Activated CD8-positive, alpha-beta T cell treated with anti-CD3 and anti-CD28 coated beads for 36 hours (primary cell): ENCODE measurements at regions of chr17 and their contacts with region 1.

Region 1: DNA sequence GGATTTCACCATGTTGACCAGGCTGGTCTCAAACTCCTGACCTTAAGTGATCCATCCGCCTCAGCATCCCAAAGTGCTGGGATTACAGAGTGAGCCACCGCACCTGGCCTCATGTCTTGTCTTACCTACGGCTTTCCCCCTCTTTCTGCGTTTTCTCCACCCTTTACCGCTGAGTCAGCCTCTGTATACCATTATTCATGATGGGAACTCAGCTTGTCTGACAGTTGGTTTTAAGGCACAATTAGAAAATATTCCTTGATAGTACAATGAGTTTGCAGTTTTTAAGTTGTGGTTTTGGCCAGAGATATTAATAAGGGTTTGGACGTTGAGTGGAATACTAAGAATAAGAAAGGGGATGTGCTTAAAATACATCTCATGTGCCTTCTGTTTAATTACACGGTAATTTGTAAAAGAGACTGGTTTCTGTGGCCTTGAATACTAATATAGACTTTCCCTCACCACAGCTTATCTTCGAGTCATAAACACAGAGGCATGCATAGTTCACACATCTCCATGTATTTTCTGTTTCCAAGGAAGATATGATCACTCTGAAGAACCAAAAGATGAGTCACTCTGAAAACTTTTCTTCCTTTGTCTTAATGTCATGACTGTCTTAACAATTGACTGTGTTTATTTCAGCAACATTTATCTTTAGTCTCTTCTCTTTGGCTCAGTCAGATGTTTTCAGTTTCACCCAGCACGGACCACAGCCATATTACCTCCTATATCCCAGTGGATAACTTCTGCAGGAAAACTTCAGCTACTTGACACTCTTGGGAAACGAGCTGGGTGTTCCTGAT is 54.4 kb downstream of the PITPNC1 start:
- DNase-seq: peak; percentile 36
- ATAC-seq: peak; percentile 69
- H3K4me3 Mint-ChIP-seq: peak overlapping the region; percentile 6
- H3K27ac Mint-ChIP-seq: peak overlapping the region; percentile 84
- H3K4me1 Mint-ChIP-seq: peaks cover 69% of the 10 kb centered on the region
- H3K27me3 Mint-ChIP-seq: no peaks in the 10 kb centered on the region
- CTCF ChIP-seq: no peak

Region 2: GRCh38 chr17:67366193-67367157 is 65.0 kb before region 1 on chr17 and contains the start of gene PSMD12:
- CTCF ChIA-PET with region 1: no interaction called
- POLR2A ChIA-PET with region 1: no interaction called
- intact Hi-C with region 1: no loop called
- DNase-seq: peak; percentile 94
- ATAC-seq: peak; percentile 94
- H3K4me3 Mint-ChIP-seq: peak within 1 kb of the TSS; percentile 97
- H3K27ac Mint-ChIP-seq: peak within 1 kb of the TSS; percentile 96
- H3K4me1 Mint-ChIP-seq: peaks cover 43% of the 10 kb centered on the region
- H3K27me3 Mint-ChIP-seq: no peaks in the 10 kb centered on the region
- CTCF ChIP-seq: no peak
- total RNA-seq, gene PSMD12: 80.9 to 89.1 TPM

Region 3: GRCh38 chr17:67452681-67453554 is 21.5 kb after region 1 on chr17:
- CTCF ChIA-PET with region 1: interaction called, 8 read pairs
- POLR2A ChIA-PET with region 1: interaction called, 57 read pairs
- intact Hi-C with region 1: no loop called
- DNase-seq: peak; percentile 62
- ATAC-seq: peak; percentile 82
- H3K4me3 Mint-ChIP-seq: peak overlapping the region; percentile 72
- H3K27ac Mint-ChIP-seq: peak overlapping the region; percentile 98
- H3K4me1 Mint-ChIP-seq: peaks cover 83% of the 10 kb centered on the region
- H3K27me3 Mint-ChIP-seq: no peaks in the 10 kb centered on the region
- CTCF ChIP-seq: no peak

Region 4: DNA sequence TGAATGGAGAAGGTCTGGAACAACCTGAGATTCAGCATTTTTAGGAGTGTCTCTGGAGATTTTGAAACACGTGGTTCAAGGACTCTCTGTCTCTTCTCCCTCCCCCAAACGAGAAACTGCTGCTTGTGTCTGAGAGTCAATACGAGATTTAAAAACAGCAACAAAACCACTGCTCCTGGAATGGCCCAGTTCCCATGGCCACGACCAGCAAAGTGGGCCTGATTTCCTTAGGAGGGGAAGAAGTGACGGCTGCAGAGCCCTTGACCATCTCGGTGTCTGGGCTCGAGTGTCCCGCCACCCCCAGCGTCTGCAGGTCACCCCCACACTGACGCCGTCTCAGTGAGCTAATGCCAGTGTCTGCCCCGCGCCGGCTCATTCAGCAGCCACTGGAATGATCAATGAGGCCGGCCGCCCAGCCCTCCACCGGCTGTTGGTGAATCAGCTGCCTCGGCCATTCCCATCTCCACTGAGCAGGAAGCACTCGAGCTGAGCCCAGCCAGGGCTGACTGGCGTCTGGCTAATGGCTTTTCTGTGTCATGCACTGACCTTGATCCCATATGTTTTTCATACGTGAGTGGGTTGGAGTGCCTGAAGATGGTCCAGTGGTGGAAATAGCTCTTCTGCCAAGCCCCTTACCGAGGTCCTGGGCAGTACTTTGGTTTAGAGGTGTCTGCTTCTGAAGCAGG is 97.4 kb after region 1 on chr17:
- CTCF ChIA-PET with region 1: no interaction called
- POLR2A ChIA-PET with region 1: no interaction called
- intact Hi-C with region 1: no loop called
- DNase-seq: no peak
- ATAC-seq: no peak
- H3K4me3 Mint-ChIP-seq: no peak overlapping the region
- H3K27ac Mint-ChIP-seq: no peak overlapping the region
- H3K4me1 Mint-ChIP-seq: peaks cover 33% of the 10 kb centered on the region
- H3K27me3 Mint-ChIP-seq: no peaks in the 10 kb centered on the region
- CTCF ChIP-seq: no peak